ENCODE measurements at regions of chr10 and their contacts with region 1.

Region 1: DNA sequence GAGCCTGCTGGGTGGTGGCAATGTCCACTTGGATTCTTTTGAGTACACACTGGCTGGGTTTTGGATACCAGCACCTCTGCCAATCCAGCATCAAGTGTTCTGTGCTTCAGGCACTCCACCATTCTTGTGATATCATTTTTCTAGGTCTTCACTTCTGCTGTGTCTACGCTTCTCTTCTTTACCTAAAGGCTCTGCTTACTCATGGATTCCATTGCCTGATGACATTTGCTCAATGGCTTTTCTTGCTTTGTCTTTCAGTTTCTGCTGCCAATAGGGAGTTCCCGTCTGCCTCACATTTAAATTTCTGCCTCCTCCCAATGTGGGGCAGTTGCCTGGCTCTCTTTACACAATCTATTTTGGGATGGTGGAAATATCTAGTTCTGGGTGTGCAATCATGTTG is 12.7 kb upstream of the PAPSS2 start:
- DNase-seq: peak; percentile 39
- ATAC-seq: peak; percentile 88
- H3K4me3 Mint-ChIP-seq: no peak overlapping the region
- H3K27ac Mint-ChIP-seq: peak overlapping the region; percentile 29
- H3K4me1 Mint-ChIP-seq: peaks cover 15% of the 10 kb centered on the region
- H3K27me3 Mint-ChIP-seq: peaks cover 8% of the 10 kb centered on the region

Region 2: GRCh38 chr10:87531908-87532622 is 114.9 kb before region 1 on chr10:
- CTCF ChIA-PET with region 1: no interaction called
- POLR2A ChIA-PET with region 1: no interaction called
- intact Hi-C with region 1: loop called (anchors 5 to 10 kb)
- DNase-seq: no peak
- ATAC-seq: no peak
- H3K4me3 Mint-ChIP-seq: no peak overlapping the region
- H3K27ac Mint-ChIP-seq: no peak overlapping the region
- H3K4me1 Mint-ChIP-seq: peaks cover 12% of the 10 kb centered on the region
- H3K27me3 Mint-ChIP-seq: no peaks in the 10 kb centered on the region

Measured in activated CD4-positive, alpha-beta T cell treated with anti-CD3 and anti-CD28 coated beads for 36 hours (primary cell).